ENCODE measurements at regions of chr3 and their contacts with region 1.

Region 1: GRCh38 chr3:143885780-143886427 is 37.6 kb upstream of the SLC9A9 start:
- DNase-seq: peak; percentile 59
- ATAC-seq: peak; percentile 84
- H3K4me3 Mint-ChIP-seq: no peak overlapping the region
- H3K27ac Mint-ChIP-seq: no peak overlapping the region
- H3K4me1 Mint-ChIP-seq: no peaks in the 10 kb centered on the region
- H3K27me3 Mint-ChIP-seq: peaks cover 9% of the 10 kb centered on the region
- CTCF ChIP-seq: peak; percentile 78

Region 2: DNA sequence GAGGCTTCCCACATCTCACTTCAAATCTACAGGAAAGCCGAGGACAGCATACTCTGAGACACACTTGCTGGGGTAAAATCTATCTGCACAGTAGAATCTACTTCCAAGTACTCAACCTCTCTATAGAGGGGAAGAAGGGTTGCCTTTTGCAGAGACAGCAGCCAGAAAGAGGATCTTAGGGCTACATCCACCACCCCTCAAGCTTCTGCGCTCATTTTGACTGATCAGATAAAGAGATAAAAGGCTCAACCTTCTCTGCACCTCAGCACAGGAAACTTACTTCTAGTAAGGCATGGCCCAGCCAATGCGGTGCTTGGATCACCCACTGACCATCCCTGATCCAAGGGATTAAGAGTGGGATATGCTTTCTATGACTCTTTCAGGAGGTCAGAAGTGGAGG is 30.7 kb before region 1 on chr3:
- CTCF ChIA-PET with region 1: interaction called, 14 read pairs
- POLR2A ChIA-PET with region 1: no interaction called
- intact Hi-C with region 1: no loop called
- DNase-seq: no peak
- ATAC-seq: no peak
- H3K4me3 Mint-ChIP-seq: no peak overlapping the region
- H3K27ac Mint-ChIP-seq: no peak overlapping the region
- H3K4me1 Mint-ChIP-seq: peaks cover 15% of the 10 kb centered on the region
- H3K27me3 Mint-ChIP-seq: no peaks in the 10 kb centered on the region
- CTCF ChIP-seq: no peak

Region 3: DNA sequence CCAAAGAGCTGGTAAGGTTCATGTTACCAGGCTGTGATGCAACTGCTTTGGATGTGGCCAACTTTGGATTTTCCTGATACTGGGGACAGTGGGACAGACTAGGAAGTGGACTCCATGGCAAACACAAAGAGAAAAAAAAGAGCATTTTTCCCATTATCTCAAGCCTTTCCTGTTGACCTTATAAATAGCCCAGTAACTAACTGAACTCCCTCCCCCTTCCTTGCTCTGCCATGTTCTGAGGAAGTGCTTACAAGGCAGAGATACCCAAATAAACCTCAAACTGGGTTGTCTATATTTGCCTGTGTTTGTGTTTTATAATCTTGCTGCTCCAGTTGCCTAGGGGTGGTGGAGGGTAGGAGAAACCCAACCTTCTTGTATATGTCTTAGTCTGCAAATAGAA is 10.4 kb before region 1 on chr3:
- CTCF ChIA-PET with region 1: interaction called, 12 read pairs
- POLR2A ChIA-PET with region 1: no interaction called
- intact Hi-C with region 1: no loop called
- DNase-seq: no peak
- ATAC-seq: no peak
- H3K4me3 Mint-ChIP-seq: no peak overlapping the region
- H3K27ac Mint-ChIP-seq: no peak overlapping the region
- H3K4me1 Mint-ChIP-seq: no peaks in the 10 kb centered on the region
- H3K27me3 Mint-ChIP-seq: no peaks in the 10 kb centered on the region
- CTCF ChIP-seq: no peak

Region 4: GRCh38 chr3:143914257-143914656 is 28.4 kb after region 1 on chr3:
- CTCF ChIA-PET with region 1: no interaction called
- POLR2A ChIA-PET with region 1: no interaction called
- intact Hi-C with region 1: no loop called
- DNase-seq: no peak
- ATAC-seq: no peak
- H3K4me3 Mint-ChIP-seq: no peak overlapping the region
- H3K27ac Mint-ChIP-seq: no peak overlapping the region
- H3K4me1 Mint-ChIP-seq: peaks cover 3% of the 10 kb centered on the region
- H3K27me3 Mint-ChIP-seq: peaks cover 12% of the 10 kb centered on the region
- CTCF ChIP-seq: no peak

Region 5: GRCh38 chr3:143951351-143951971 is 65.6 kb after region 1 on chr3:
- CTCF ChIA-PET with region 1: interaction called, 14 read pairs
- POLR2A ChIA-PET with region 1: no interaction called
- intact Hi-C with region 1: loop called (anchors 5 kb)
- DNase-seq: peak; percentile 58
- ATAC-seq: peak; percentile 77
- H3K4me3 Mint-ChIP-seq: no peak overlapping the region
- H3K27ac Mint-ChIP-seq: no peak overlapping the region
- H3K4me1 Mint-ChIP-seq: peaks cover 1% of the 10 kb centered on the region
- H3K27me3 Mint-ChIP-seq: peaks cover 9% of the 10 kb centered on the region
- CTCF ChIP-seq: peak; percentile 79

Measured in activated CD8-positive, alpha-beta T cell treated with anti-CD3 and anti-CD28 coated beads for 36 hours (primary cell).